ENCODE measurements at regions of chr6 and their contacts with region 1.

Region 1: GRCh38 chr6:63066055-63066704 is 145.1 kb upstream of the FKBP1C start:
- DNase-seq: peak; percentile 9
- CTCF ChIP-seq: peak; percentile 15

Region 2: GRCh38 chr6:62940848-62941247 is 125.3 kb before region 1 on chr6:
- in situ Hi-C with region 1: no loop called
- DNase-seq: no peak
- CTCF ChIP-seq: no peak

Region 3: DNA sequence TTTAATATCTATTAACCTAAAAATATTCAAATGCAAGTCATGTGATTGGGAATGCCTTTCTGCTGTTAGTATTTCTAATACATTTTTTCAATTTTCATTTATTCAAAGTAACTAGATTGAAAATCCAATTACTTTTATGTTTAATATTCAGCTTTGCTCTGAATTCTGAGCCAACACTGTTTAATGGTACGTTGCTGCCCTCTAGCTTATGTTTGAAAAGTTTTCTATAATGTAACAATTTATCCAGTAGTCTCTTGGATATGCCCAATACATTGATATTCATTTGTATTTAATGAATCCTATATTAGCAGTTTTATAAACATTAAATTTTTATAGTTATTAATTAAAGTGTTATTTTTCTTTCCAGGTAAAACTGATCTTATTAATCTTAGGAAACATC is 206.2 kb after region 1 on chr6:
- in situ Hi-C with region 1: loop called (anchors 25 kb)
- DNase-seq: peak; percentile 37
- CTCF ChIP-seq: no peak

Measured in GM13976 (cell line).